ENCODE measurements at regions of chr3 and their contacts with region 1.

Region 1: DNA sequence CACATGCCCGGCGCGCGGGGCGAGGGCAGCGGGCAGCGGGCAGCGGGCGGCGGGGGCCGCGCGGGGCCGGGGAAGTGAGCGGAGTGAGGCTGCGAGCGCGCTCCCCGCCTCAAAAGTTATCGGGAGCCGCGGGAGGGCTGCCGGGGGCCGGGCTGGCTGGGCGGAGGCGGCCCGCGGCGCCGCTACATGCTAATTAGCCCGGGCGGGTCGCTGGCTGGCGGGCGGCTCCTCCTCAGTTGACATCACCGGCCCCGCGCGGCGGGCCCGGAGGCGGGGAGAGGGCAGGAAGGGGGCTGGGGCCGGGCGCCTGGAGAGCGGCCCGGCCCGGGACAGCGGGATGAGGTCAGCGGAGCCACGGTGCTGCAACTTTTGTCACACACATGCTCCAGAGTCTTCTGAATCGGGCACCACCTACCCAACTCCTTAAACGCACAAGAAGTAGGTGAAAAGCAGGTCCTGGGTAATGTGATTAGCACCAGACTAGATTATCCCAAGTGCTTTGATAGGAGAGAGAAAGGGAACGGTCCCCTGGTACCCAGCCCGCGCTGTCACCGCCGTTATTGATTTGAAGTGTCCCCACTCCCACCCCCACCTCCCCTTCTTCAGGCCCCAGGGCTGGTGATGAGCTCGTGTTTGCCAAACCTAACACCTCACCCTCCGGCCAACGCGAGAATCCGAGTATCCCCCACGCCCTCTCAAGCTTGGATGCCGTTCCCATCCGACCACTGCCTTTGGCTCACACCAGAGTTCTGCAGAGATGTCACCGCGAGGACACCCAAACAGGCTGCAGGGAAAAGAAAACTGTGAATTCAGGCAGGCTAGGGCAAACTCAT is at the start of gene HEG1:
- DNase-seq: peak; percentile 85
- ATAC-seq: peak; percentile 58
- H3K4me3 Mint-ChIP-seq: peak within 1 kb of the TSS; percentile 94
- H3K27ac Mint-ChIP-seq: peak within 1 kb of the TSS; percentile 90
- H3K4me1 Mint-ChIP-seq: peaks cover 40% of the 10 kb centered on the region
- H3K27me3 Mint-ChIP-seq: peaks cover 11% of the 10 kb centered on the region
- total RNA-seq, gene HEG1: 5.9 to 6.4 TPM

Region 2: DNA sequence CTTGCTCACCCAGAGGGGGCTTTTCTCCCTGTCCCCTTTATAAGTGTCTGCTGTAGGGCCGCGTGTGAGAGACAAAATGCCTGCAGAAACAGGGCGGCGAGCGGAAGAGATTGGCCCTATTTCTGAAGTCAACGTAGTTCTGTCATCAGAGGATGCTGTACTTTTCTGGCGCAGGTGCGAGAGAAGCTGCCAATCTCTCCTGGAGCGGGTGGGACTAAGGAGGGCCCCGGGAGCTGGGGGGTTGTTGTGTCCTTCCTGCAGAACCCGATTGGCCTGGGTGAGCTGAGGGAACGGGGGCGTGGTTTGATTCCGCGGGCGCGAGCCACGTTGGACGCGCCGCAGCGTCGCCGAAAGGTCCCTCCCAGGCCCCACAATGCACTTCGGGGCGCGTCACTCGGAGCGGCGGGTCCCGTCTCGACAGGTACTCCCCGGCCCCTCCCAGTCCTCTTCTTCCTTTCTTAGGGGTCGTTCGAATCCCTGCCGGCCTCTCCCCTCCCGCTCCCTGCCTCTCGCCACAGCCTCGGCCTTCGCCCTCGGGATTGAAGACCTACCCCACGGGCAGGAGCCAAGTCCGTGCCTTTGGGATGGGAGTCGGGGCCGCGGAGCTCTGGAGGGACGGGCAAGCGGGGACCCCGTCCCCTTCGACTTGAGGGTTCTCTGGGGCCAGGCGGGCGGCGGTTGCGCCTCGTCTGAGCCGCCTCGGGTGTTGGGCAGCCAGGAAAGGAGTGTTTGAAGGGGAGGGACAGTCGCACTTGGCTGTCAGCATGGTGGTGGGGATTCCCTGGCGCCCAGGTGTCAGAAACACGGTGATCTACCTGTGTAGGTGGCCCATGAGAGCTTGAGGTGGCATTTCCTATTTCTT is 1854.3 kb before region 1 on chr3 and contains the start of gene SEC22A:
- CTCF ChIA-PET with region 1: no interaction called
- POLR2A ChIA-PET with region 1: no interaction called
- intact Hi-C with region 1: loop called in 1 of 2 experiments (anchors 10 kb)
- DNase-seq: peak; percentile 98
- ATAC-seq: peak; percentile 99
- H3K4me3 Mint-ChIP-seq: peak within 1 kb of the TSS; percentile 96
- H3K27ac Mint-ChIP-seq: peak within 1 kb of the TSS; percentile 97
- H3K4me1 Mint-ChIP-seq: peaks cover 28% of the 10 kb centered on the region
- H3K27me3 Mint-ChIP-seq: no peaks in the 10 kb centered on the region
- total RNA-seq, gene SEC22A: 13.2 to 16.3 TPM

Region 3: GRCh38 chr3:124730129-124730940 is 325.8 kb before region 1 on chr3 and contains the start of gene UMPS:
- CTCF ChIA-PET with region 1: no interaction called
- POLR2A ChIA-PET with region 1: no interaction called
- intact Hi-C with region 1: loop called in 1 of 2 experiments (anchors 5 kb)
- DNase-seq: peak; percentile 97
- ATAC-seq: peak; percentile 99
- H3K4me3 Mint-ChIP-seq: peak within 1 kb of the TSS; percentile 100
- H3K27ac Mint-ChIP-seq: peak within 1 kb of the TSS; percentile 100
- H3K4me1 Mint-ChIP-seq: peaks cover 32% of the 10 kb centered on the region
- H3K27me3 Mint-ChIP-seq: peaks cover 7% of the 10 kb centered on the region
- total RNA-seq, gene UMPS: 35.9 to 42.4 TPM

Region 4: DNA sequence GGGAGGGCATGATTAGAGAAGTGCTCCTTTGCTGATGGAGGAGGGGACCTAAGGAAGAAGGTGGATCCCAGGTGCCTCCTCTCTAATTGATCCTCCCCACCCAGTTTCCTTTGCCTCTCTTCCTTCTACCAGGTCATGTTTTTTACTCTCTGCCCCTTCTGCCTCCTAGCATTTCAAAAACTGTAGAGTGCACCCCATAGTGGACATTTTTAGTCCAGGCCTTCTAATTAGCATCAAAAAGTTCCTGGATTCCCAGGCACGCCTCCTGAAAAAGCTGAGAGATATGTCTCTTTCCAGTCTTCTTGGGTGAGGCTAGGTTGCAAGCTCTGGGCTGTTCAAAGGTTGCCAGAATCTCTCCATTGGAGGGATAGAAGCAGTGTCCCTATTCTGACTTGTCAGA is 150.3 kb before region 1 on chr3:
- CTCF ChIA-PET with region 1: no interaction called
- POLR2A ChIA-PET with region 1: no interaction called
- intact Hi-C with region 1: no loop called
- DNase-seq: no peak
- ATAC-seq: no peak
- H3K4me3 Mint-ChIP-seq: no peak overlapping the region
- H3K27ac Mint-ChIP-seq: no peak overlapping the region
- H3K4me1 Mint-ChIP-seq: peaks cover 2% of the 10 kb centered on the region
- H3K27me3 Mint-ChIP-seq: peaks cover 2% of the 10 kb centered on the region

Region 5: GRCh38 chr3:125107861-125108567 is 51.9 kb after region 1 on chr3:
- CTCF ChIA-PET with region 1: interaction called, 4 read pairs
- POLR2A ChIA-PET with region 1: no interaction called
- intact Hi-C with region 1: loop called in 1 of 2 experiments (anchors 5 kb)
- DNase-seq: no peak
- ATAC-seq: peak; percentile 59
- H3K4me3 Mint-ChIP-seq: no peak overlapping the region
- H3K27ac Mint-ChIP-seq: no peak overlapping the region
- H3K4me1 Mint-ChIP-seq: peaks cover 33% of the 10 kb centered on the region
- H3K27me3 Mint-ChIP-seq: peaks cover 22% of the 10 kb centered on the region

Region 6: DNA sequence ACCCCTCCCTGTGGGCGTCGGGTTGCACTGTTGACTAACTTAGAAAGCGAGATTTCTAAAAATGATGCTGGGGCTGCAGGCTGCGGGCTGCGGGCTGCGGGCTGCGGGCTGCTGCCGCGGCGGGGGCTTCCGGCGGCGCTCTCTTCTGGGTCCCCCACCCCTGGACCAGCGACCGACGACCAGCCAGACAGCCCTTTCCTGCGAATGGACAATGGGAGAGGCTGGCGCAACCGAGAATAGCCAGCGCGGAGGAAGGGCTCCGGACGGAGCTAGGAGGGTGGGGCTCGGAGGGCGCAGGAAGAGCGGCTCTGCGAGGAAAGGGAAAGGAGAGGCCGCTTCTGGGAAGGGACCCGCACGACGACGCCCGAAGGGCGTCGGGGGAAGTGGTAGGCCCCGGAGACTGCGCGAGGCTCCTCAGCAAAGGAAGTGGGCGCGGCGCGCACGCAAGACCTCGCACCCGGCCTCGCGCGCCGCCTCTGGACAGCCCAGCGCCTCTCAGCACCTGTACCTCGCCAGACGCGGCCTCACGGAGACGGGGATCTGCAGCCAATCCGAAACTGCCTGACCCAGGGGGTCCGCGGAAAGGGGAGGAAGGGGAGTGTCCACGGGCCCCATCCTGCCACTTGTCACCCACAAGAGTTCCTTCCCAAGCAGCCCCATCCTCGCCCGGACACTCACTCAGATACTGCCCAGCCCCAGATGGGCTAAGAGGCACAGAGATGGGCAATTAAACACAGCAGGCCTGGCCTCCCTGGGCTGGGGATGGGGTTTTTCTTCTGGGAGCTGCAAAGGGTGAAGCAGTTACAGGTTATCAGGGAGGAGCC is 85.7 kb after region 1 on chr3:
- CTCF ChIA-PET with region 1: no interaction called
- POLR2A ChIA-PET with region 1: no interaction called
- intact Hi-C with region 1: loop called (anchors 2 kb)
- DNase-seq: peak; percentile 84
- ATAC-seq: peak; percentile 85
- H3K4me3 Mint-ChIP-seq: peak overlapping the region; percentile 56
- H3K27ac Mint-ChIP-seq: peak overlapping the region; percentile 56
- H3K4me1 Mint-ChIP-seq: peaks cover 28% of the 10 kb centered on the region
- H3K27me3 Mint-ChIP-seq: peaks cover 36% of the 10 kb centered on the region

Region 7: DNA sequence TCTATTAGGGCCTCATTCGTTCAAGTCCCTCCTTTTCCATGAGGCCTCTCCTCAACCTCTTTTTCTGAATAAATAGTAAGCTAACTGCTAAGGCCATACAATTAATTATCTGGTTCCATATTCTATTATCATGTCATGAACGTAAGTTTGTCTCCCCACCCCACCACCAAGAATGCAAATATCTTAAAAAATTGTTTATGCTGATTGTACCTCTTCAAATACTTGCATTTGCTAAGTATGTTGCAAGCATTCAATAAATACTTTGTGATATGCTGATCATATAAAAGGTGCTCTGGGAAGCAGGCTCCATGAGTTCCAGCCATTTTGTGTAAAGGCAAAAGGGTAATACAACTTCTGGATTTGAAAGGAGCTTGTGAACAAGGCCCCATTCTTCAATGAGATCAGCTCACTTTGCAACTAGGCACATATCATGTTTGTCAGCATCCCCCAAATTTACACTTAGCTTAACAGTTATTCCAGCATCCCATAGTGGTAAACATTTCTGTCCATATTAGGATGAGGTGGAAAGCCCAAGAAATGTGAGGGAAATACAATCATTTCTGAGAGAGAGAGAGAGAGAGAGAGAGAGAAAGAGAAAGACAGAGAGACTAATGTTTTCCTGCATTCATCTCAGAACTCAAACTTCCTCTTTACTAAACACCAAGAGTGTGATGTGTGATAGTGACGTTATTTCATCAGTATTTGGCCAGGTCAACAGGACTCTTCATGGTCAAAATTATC is 123.2 kb after region 1 on chr3:
- CTCF ChIA-PET with region 1: no interaction called
- POLR2A ChIA-PET with region 1: no interaction called
- intact Hi-C with region 1: no loop called
- DNase-seq: no peak
- ATAC-seq: no peak
- H3K4me3 Mint-ChIP-seq: no peak overlapping the region
- H3K27ac Mint-ChIP-seq: no peak overlapping the region
- H3K4me1 Mint-ChIP-seq: no peaks in the 10 kb centered on the region
- H3K27me3 Mint-ChIP-seq: no peaks in the 10 kb centered on the region

Region 8: DNA sequence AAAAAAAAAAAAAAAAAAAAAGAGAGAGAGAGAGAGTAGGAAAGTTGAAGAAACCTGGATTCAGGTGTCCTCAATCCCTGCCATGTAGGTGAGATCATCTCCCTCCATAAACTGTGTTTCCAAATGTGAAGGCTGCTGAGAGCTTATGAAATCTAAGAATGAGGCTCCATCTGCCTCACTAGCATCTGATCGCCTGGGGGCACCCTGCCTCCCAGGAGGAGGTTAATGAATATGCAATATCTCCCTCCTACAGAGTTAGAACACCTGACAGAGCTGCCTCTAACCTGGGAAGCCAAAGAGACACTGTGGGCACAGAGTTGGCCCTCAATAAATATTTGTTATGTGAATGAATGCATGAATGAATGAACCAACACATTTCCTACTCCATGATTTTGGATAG is 342.8 kb after region 1 on chr3:
- CTCF ChIA-PET with region 1: no interaction called
- POLR2A ChIA-PET with region 1: no interaction called
- intact Hi-C with region 1: no loop called
- DNase-seq: no peak
- ATAC-seq: no peak
- H3K4me3 Mint-ChIP-seq: no peak overlapping the region
- H3K27ac Mint-ChIP-seq: no peak overlapping the region
- H3K4me1 Mint-ChIP-seq: no peaks in the 10 kb centered on the region
- H3K27me3 Mint-ChIP-seq: peaks cover 12% of the 10 kb centered on the region

Region 9: GRCh38 chr3:125437631-125438435 is 381.7 kb after region 1 on chr3:
- CTCF ChIA-PET with region 1: no interaction called
- POLR2A ChIA-PET with region 1: no interaction called
- intact Hi-C with region 1: loop called in 1 of 2 experiments (anchors 5 kb)
- DNase-seq: peak; percentile 76
- ATAC-seq: peak; percentile 60
- H3K4me3 Mint-ChIP-seq: no peak overlapping the region
- H3K27ac Mint-ChIP-seq: no peak overlapping the region
- H3K4me1 Mint-ChIP-seq: peaks cover 3% of the 10 kb centered on the region
- H3K27me3 Mint-ChIP-seq: no peaks in the 10 kb centered on the region

Region 10: GRCh38 chr3:125594581-125595011 is 538.5 kb after region 1 on chr3:
- CTCF ChIA-PET with region 1: no interaction called
- POLR2A ChIA-PET with region 1: no interaction called
- intact Hi-C with region 1: loop called in 1 of 2 experiments (anchors 1 kb)
- DNase-seq: peak; percentile 42
- ATAC-seq: no peak
- H3K4me3 Mint-ChIP-seq: peak overlapping the region; percentile 92
- H3K27ac Mint-ChIP-seq: peak overlapping the region; percentile 91
- H3K4me1 Mint-ChIP-seq: peaks cover 24% of the 10 kb centered on the region
- H3K27me3 Mint-ChIP-seq: no peaks in the 10 kb centered on the region

Measured in activated CD4-positive, alpha-beta T cell treated with anti-CD3 and anti-CD28 coated beads for 36 hours (primary cell).